Right lobe of liver (tissue), 6 donors: ENCODE measurements at regions of chr4 and their contacts with region 1.

Region 1: GRCh38 chr4:113404841-113405240 is 355.4 kb downstream of the ANK2 start:
- DNase-seq: no peak
- ATAC-seq: peak; percentile 13 to 58 (median 46)
- H3K4me3 ChIP-seq: no peak overlapping the region
- H3K27ac ChIP-seq: peak overlapping the region; percentile 16 to 96 (median 71)
- H3K4me1 ChIP-seq: peaks cover 0 to 44% (median 13%) of the 10 kb centered on the region in 4 donors
- H3K27me3 ChIP-seq: no peaks in the 10 kb centered on the region
- CTCF ChIP-seq: no peak
- POLR2A ChIP-seq: no peak

Region 2: DNA sequence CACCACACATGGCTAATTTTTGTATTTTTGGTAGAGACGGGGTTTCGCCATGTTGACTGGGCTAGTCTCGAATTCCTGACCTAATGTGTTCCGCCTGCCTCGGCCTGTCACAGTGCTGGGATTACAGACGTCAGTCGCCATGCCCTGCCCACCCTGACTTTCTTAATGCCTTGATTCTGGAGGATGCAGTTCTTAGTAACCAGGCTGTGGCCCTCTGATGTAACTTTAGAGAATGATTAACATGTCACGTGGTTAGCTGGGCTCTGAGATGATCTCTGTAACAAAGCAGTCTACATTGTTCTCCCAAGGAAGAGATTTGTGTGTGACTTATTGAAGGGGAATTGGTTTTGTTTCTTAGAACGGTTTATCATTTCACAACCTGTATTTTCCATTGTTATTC is 324.8 kb before region 1 on chr4:
- intact Hi-C with region 1: no loop called
- DNase-seq: peak in 1 of 3 donors; percentile 46
- ATAC-seq: peak; percentile 79 to 92 (median 82)
- H3K4me3 ChIP-seq: no peak overlapping the region
- H3K27ac ChIP-seq: no peak overlapping the region
- H3K4me1 ChIP-seq: peaks cover 0 to 9% (median 0%) of the 10 kb centered on the region in 4 donors
- H3K27me3 ChIP-seq: no peaks in the 10 kb centered on the region
- CTCF ChIP-seq: no peak
- POLR2A ChIP-seq: no peak

Region 3: DNA sequence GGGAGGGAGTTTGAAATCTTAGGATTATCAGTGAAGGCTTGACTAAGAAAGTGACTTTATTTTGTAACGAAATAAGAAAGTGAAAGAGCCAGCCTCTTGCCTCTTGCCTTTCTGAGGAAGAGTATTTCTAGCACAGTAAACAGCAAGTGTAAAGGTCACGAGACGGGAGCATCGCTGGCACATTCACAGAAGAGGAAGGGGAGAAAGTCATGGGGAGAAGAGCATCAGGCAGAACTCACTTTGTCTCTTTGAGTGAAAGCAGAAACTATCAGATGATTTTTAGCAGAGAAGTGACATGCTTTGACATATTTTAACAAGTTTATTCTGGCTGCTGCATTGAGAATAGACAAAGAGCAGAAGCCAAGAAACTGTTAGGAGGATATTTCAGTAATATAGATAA is 42.9 kb after region 1 on chr4:
- intact Hi-C with region 1: no loop called
- DNase-seq: peak in 1 of 3 donors; percentile 24
- ATAC-seq: peak; percentile 61 to 68 (median 66)
- H3K4me3 ChIP-seq: no peak overlapping the region
- H3K27ac ChIP-seq: peak overlapping the region in 2 of 3 donors; percentile 9 to 15
- H3K4me1 ChIP-seq: peaks cover 0 to 26% (median 0%) of the 10 kb centered on the region in 4 donors
- H3K27me3 ChIP-seq: no peaks in the 10 kb centered on the region
- CTCF ChIP-seq: no peak
- POLR2A ChIP-seq: no peak

Region 4: DNA sequence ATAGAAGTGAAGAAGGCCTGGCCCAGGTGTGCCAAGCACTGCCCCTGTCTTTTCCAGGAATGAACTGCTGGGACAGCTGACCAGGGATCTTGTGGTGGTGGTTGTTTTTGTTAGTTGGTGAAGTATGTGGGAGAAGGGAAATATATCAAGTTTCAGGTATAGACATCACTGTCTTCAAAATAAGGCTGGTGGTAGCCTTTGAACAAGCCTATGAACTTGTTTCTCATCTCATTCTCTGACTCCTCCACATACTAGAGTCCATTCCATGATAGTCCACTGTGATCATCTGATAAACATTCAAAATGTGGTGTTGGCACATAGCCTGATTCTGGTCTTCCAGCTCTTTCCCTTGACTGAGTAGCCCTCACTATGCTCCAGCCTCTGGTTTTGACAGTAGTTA is 53.0 kb after region 1 on chr4:
- intact Hi-C with region 1: no loop called
- DNase-seq: no peak
- ATAC-seq: peak in 2 of 4 donors; percentile 37 to 46
- H3K4me3 ChIP-seq: no peak overlapping the region
- H3K27ac ChIP-seq: no peak overlapping the region
- H3K4me1 ChIP-seq: no peaks in the 10 kb centered on the region
- H3K27me3 ChIP-seq: no peaks in the 10 kb centered on the region
- CTCF ChIP-seq: no peak
- POLR2A ChIP-seq: no peak

Region 5: DNA sequence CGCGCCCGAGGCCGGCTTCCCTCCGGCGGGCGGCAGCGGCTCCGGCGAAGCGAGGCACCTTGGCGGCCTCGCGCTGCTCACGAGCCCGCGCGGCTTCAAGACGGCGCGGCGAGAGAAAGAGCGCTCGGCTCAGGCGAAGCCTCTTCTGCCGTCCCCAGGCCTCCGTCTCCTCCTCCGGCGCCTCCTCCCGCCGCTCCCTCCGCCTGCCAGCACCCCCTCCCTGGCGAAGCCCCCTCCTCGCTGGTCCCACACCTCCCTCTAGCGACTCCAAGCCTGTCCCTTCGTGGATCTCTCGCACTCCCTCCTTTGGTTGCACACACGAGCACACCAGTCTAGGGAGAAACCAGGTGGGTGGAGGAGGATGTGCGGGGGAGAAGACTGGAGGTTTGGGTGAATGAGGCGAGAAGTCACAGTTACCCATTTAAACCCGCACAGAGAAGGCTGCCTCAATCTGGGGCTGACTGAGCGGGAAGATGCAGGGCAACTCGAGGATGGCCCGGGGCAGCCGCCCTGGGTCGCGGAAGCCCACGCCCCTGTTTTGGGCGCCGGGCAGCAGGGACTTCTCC is 356.9 kb after region 1 on chr4 and contains the start of gene CAMK2D:
- intact Hi-C with region 1: loop called in 1 of 2 experiments (anchors 5 kb)
- DNase-seq: peak; percentile 91 to 94 (median 91)
- ATAC-seq: peak; percentile 71 to 86 (median 78)
- H3K4me3 ChIP-seq: peak within 1 kb of the TSS; percentile 49 to 75 (median 74)
- H3K27ac ChIP-seq: peak within 1 kb of the TSS; percentile 94 to 99 (median 99)
- H3K4me1 ChIP-seq: peaks cover 0 to 19% (median 4%) of the 10 kb centered on the region in 4 donors
- H3K27me3 ChIP-seq: no peaks in the 10 kb centered on the region
- CTCF ChIP-seq: peak; percentile 32 to 58 (median 53)
- POLR2A ChIP-seq: peak; percentile 3
- total RNA-seq, gene CAMK2D: 17.0 to 30.6 (median 22.6) TPM